Prostate gland (tissue), 2 donors: ENCODE measurements at regions of chr2 and their contacts with region 1.

Region 1: DNA sequence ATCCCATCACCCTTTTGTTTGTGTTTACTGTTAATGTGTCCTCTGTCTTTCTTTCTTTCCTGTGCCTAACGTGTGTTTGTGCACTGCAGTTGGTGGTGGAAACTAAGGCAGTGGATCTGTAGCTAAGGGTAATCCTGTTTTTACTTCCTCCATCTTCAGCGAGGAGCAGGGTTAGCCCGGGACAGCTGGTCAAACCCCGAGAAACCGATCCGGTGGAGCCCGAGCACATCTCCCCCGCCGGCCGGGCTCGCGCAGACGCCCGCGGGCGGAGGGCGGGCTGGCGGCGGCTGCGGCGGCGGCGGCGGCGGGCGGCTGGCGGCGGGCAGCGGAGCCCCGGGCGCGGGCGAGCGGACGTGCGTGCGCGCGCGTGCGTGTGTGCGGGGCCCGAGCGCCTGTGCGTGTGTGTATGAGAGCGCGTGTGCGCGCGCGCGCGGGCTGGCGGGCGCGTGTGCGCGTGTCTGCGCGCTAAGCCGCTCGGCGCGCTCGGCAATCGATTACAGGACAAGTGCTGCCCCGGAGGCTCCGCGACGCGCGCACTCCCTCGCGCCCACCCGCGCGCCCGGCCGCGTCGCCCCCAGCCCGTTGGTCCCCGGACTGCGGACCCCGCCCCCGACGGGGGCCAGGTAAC is at the start of gene IKZF2:
- DNase-seq: peak; percentile 81
- H3K4me3 ChIP-seq: peak within 1 kb of the TSS; percentile 80 to 85
- H3K27ac ChIP-seq: peak within 1 kb of the TSS; percentile 96
- H3K4me1 ChIP-seq: peaks cover 4% of the 10 kb centered on the region
- H3K27me3 ChIP-seq: no peaks in the 10 kb centered on the region
- CTCF ChIP-seq: no peak
- POLR2A ChIP-seq: peak; percentile 33
- total RNA-seq, gene IKZF2: 24.4 to 27.8 TPM

Region 2: DNA sequence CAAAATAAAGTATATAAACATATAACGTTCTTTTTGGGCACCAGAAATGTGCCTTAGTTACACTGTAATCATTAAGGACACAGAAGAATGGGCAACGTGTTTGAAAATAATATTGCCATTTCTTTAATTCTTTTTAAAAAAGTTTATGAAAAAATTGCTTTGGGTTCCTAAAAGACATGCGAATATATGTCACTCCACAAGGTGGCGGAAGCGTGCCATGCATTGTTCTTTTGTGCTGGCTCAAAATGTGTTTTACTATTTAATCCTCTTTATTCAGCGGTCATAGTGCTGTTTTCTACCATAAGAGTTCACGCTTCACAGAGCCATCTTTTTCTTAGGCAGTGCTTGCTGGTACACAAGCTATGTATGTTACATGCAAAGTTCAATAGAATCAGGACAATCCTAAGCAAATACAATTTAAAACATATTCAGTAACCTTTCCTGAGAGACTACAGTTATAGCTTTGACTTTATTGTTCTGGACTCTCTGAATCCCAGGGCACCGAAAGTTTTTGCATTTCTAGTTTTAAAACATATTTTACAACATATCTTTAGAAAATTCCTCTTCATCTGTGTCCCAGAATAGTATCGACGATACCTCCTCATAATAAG is 465.2 kb before region 1 on chr2:
- intact Hi-C with region 1: loop called (anchors 5 kb)
- DNase-seq: peak; percentile 44
- H3K4me3 ChIP-seq: no peak overlapping the region
- H3K27ac ChIP-seq: no peak overlapping the region
- H3K4me1 ChIP-seq: no peaks in the 10 kb centered on the region
- H3K27me3 ChIP-seq: no peaks in the 10 kb centered on the region
- CTCF ChIP-seq: peak in 3 of 4 experiments; percentile 65 to 81 (median 71)
- POLR2A ChIP-seq: no peak

Region 3: DNA sequence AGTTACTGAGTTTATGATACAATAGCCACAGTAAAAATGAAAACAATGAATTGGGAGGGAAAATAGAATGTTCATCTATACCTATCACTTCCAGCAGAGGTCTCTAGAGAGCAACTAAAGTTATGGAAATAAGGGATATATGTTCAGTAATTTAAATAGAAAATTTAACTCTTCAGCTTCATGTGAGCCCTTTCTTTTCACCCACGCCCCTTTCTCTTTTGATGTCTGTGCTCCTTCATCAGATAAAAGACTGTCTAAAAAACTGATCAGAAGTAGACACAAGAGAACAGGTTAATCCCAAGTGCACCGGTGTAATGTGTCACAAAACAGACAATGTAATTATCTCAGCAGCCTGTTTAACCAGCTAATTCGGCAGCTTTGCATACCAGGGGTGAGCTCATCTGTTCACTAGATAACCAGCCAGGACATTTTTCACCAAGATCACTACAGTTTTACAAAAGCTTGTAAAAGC is 374.5 kb before region 1 on chr2:
- intact Hi-C with region 1: loop called (anchors 2 kb)
- DNase-seq: no peak
- H3K4me3 ChIP-seq: no peak overlapping the region
- H3K27ac ChIP-seq: no peak overlapping the region
- H3K4me1 ChIP-seq: no peaks in the 10 kb centered on the region
- H3K27me3 ChIP-seq: no peaks in the 10 kb centered on the region
- CTCF ChIP-seq: peak in 3 of 4 experiments; percentile 53 to 80 (median 77)
- POLR2A ChIP-seq: no peak

Region 4: GRCh38 chr2:213214209-213214608 is 62.7 kb after region 1 on chr2:
- intact Hi-C with region 1: no loop called
- DNase-seq: no peak
- H3K4me3 ChIP-seq: no peak overlapping the region
- H3K27ac ChIP-seq: no peak overlapping the region
- H3K4me1 ChIP-seq: no peaks in the 10 kb centered on the region
- H3K27me3 ChIP-seq: no peaks in the 10 kb centered on the region
- CTCF ChIP-seq: no peak
- POLR2A ChIP-seq: no peak